ENCODE measurements at regions of chr14 and their contacts with region 1.

Region 1: DNA sequence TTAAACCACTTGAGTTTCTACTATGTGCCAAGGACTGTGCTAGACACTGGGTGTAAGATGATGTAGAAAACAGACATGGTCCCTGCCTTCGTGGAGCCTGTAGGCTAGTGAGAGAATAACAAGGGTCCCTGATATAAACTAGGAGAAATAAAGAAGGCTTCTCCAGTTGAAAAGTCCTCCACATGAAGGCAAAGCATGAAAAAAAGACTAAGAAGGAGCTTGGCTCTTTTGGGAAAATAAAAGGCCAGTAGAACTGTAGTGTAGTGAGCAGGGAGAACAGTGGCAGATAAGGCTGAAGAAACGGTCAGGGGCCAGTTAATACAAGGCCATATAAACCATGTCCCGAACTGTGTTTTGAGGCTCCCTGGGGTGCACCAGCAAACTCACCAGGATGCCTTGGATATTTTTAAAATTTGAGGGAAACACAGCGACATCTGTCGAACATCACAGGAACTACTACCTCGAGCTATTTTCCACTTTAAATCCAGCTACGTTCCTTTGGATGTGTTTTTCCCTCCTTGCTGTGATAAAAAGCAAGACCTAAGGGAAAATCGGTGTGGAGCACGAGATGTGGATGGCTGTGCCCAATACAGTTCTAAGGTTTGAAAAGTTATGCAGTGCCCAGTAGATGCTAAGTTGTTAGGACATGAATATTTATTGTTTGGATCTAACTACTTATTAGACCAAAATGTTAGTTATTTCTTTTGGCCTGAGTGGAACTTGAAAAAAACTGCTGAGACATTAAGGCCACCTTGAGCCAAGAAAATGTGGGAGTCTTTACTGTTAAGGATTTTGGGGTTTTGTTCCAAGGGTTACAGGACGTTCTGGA is 8.5 kb upstream of the CFL2 start:
- DNase-seq: peak; percentile 69

Region 2: GRCh38 chr14:34699873-34700621 is 22.9 kb before region 1 on chr14:
- CTCF ChIA-PET with region 1: no interaction called
- POLR2A ChIA-PET with region 1: no interaction called
- DNase-seq: no peak

Region 3: DNA sequence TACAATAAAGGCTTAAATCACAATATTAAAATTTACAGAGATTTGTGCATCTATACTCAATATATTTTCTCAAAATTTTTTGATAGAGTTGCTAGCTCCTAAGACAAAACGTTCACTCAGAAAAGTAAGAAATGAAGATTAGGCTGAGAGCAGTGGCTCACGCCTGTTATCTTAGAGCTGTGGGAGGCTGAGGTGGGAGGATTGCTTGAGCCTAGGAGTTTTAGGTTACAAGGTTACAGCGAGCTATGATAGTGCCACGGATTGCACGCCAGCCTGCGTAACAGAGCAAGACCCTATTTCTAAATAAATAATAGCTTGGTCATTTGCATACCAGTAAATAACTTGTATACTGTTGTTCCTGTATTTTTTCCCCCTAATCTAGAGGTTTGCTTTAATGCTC is 26.5 kb after region 1 on chr14:
- CTCF ChIA-PET with region 1: interaction called, 11 read pairs
- POLR2A ChIA-PET with region 1: no interaction called
- DNase-seq: no peak

Measured in HEK293T (cell line).